SK-N-SH (cell line): ENCODE measurements at regions of chr7 and their contacts with region 1.

Region 1: GRCh38 chr7:142603870-142604448 is 145.3 kb upstream of the PRSS1 start:
- DNase-seq: peak; percentile 81
- H3K4me3 ChIP-seq: peak overlapping the region; percentile 6 to 7; a peak in 2 of 4 replicates
- H3K27ac ChIP-seq: no peak overlapping the region
- H3K4me1 ChIP-seq: peaks cover 0 to 5% of the 10 kb centered on the region in 2 experiments; a peak in 2 of 4 replicates
- H3K27me3 ChIP-seq: no peaks in the 10 kb centered on the region
- CTCF ChIP-seq: peak; percentile 99
- EP300 ChIP-seq: no peak
- RAD21 ChIP-seq: peak; percentile 100

Region 2: GRCh38 chr7:142431491-142431890 is 172.5 kb before region 1 on chr7:
- CTCF ChIA-PET with region 1: no interaction called
- POLR2A ChIA-PET with region 1: no interaction called
- DNase-seq: no peak
- H3K4me3 ChIP-seq: no peak overlapping the region
- H3K27ac ChIP-seq: no peak overlapping the region
- H3K4me1 ChIP-seq: peaks cover 0 to 3% of the 10 kb centered on the region in 2 experiments; a peak in 1 of 4 replicates
- H3K27me3 ChIP-seq: no peaks in the 10 kb centered on the region; the same call in 1 of the 2 replicates
- CTCF ChIP-seq: no peak
- EP300 ChIP-seq: no peak
- RAD21 ChIP-seq: no peak

Region 3: DNA sequence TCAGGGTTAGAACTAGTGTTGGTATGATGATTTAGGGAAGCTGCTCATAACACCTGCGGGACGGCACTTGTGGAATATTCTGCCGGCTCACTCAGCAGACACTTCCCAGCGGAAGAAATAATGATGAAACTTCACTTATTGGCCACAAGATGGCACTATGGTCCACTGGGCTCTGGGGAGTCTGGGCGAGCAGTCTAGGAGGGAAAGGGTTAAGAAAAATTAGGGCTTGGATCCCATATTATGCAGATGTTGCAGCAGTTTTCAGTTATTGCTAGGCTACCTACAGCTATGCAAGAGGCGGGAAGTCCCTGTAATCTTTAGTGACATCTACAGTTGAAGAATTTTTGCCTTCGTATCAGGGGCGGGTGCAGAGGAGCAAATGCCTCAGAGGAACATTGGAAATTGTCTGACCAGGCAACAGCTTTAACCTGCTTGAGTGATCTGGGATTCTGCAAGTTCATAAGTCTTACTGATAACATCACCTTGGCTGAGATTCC is 107.4 kb before region 1 on chr7:
- CTCF ChIA-PET with region 1: interaction called, 14 read pairs
- POLR2A ChIA-PET with region 1: no interaction called
- DNase-seq: peak; percentile 67
- H3K4me3 ChIP-seq: no peak overlapping the region
- H3K27ac ChIP-seq: no peak overlapping the region
- H3K4me1 ChIP-seq: peaks cover 0 to 3% of the 10 kb centered on the region in 2 experiments; a peak in 1 of 4 replicates
- H3K27me3 ChIP-seq: peaks cover 21% of the 10 kb centered on the region; the same call in 1 of the 2 replicates
- CTCF ChIP-seq: peak; percentile 95
- EP300 ChIP-seq: no peak
- RAD21 ChIP-seq: peak; percentile 69

Region 4: GRCh38 chr7:142568435-142569097 is 35.4 kb before region 1 on chr7:
- CTCF ChIA-PET with region 1: interaction called, 12 read pairs
- POLR2A ChIA-PET with region 1: no interaction called
- DNase-seq: no peak
- H3K4me3 ChIP-seq: no peak overlapping the region
- H3K27ac ChIP-seq: peak overlapping the region in 1 of 2 experiments; percentile 61; a peak in 2 of 4 replicates
- H3K4me1 ChIP-seq: peaks cover 0 to 28% of the 10 kb centered on the region in 2 experiments; a peak in 3 of 4 replicates
- H3K27me3 ChIP-seq: no peaks in the 10 kb centered on the region
- CTCF ChIP-seq: no peak
- EP300 ChIP-seq: peak in 1 of 2 experiments; percentile 91; a peak in 2 of 4 replicates
- RAD21 ChIP-seq: no peak

Region 5: GRCh38 chr7:142632291-142633134 is 28.6 kb after region 1 on chr7:
- CTCF ChIA-PET with region 1: interaction called, 87 read pairs
- POLR2A ChIA-PET with region 1: interaction called, 3 read pairs
- DNase-seq: peak; percentile 87
- H3K4me3 ChIP-seq: no peak overlapping the region
- H3K27ac ChIP-seq: peak overlapping the region in 1 of 2 experiments; percentile 11; a peak in 1 of 4 replicates
- H3K4me1 ChIP-seq: no peaks in the 10 kb centered on the region; a peak in 2 of 4 replicates
- H3K27me3 ChIP-seq: peaks cover 14% of the 10 kb centered on the region; the same call in 1 of the 2 replicates
- CTCF ChIP-seq: peak; percentile 93
- EP300 ChIP-seq: no peak
- RAD21 ChIP-seq: peak; percentile 96

Region 6: DNA sequence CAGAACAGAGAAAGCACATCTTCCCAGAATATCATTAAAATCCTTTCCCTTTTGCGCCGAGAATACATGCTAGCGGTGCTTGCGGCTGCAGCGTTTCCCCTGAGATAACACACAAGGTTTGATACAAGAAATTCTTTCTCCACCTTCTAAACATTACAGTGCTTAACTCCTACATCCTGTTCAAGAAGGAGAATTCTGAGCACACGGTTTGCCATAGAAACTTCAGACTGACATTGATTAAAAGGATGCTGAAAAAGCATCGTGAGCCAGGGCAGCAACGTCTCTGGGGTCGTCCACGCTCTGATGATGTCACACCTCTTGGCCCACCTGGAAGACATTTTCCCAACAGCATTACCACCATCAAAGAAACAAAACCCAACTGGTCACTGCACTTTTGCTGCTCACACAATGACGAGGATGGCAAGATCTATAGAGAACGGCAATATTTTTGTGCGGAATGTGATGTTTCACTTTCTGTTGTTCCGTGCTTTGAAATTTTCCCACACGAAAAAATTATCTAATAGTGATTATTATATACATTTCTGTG is 118.4 kb after region 1 on chr7:
- CTCF ChIA-PET with region 1: no interaction called
- POLR2A ChIA-PET with region 1: no interaction called
- DNase-seq: no peak
- H3K4me3 ChIP-seq: no peak overlapping the region
- H3K27ac ChIP-seq: no peak overlapping the region
- H3K4me1 ChIP-seq: peaks cover 0 to 5% of the 10 kb centered on the region in 2 experiments; a peak in 1 of 4 replicates
- H3K27me3 ChIP-seq: no peaks in the 10 kb centered on the region; the same call in 1 of the 2 replicates
- CTCF ChIP-seq: no peak
- EP300 ChIP-seq: no peak
- RAD21 ChIP-seq: no peak

Region 7: GRCh38 chr7:142796608-142797385 is 192.8 kb after region 1 on chr7:
- CTCF ChIA-PET with region 1: interaction called, 417 read pairs
- POLR2A ChIA-PET with region 1: no interaction called
- DNase-seq: peak; percentile 75
- H3K4me3 ChIP-seq: peak overlapping the region in 1 of 2 experiments; percentile 28; a peak in 1 of 4 replicates
- H3K27ac ChIP-seq: no peak overlapping the region
- H3K4me1 ChIP-seq: peaks cover 0 to 9% of the 10 kb centered on the region in 2 experiments; a peak in 1 of 4 replicates
- H3K27me3 ChIP-seq: peaks cover 61% of the 10 kb centered on the region
- CTCF ChIP-seq: no peak
- EP300 ChIP-seq: no peak
- RAD21 ChIP-seq: no peak

Region 8: DNA sequence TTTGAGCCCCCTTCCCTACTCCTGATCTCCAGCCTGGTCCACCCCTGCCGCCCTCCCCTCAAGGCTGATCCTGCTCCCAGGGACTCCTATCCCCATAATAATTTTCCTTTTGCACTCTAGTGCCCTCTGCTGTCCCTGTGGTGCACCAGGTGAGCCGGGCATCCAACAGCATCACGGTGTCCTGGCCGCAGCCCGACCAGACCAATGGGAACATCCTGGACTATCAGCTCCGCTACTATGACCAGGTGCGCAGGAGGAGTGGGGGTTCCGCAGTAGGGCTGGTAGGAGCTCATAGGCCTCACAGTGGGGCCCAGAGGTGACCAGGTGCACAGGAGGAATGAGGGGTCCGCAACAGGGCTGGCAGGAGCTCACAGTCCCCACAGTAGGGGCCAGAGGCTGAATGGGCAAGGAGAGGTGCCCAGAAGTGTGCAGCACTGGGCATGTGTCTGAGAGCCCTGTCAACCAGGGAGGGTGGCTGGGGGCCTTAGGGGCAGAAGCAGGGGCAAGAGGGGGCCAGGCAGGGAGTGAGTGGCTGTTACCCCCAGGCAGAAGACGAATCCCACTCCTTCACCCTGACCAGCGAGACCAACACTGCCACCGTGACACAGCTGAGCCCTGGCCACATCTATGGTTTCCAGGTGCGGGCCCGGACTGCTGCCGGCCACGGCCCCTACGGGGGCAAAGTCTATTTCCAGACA is 262.6 kb after region 1 on chr7:
- CTCF ChIA-PET with region 1: interaction called, 38 read pairs
- POLR2A ChIA-PET with region 1: no interaction called
- DNase-seq: peak; percentile 88
- H3K4me3 ChIP-seq: no peak overlapping the region
- H3K27ac ChIP-seq: no peak overlapping the region
- H3K4me1 ChIP-seq: no peaks in the 10 kb centered on the region
- H3K27me3 ChIP-seq: peaks cover 11% of the 10 kb centered on the region
- CTCF ChIP-seq: peak; percentile 77
- EP300 ChIP-seq: no peak
- RAD21 ChIP-seq: peak; percentile 69

Region 9: GRCh38 chr7:142927085-142927745 is 323.3 kb after region 1 on chr7:
- CTCF ChIA-PET with region 1: no interaction called
- POLR2A ChIA-PET with region 1: no interaction called
- DNase-seq: no peak
- H3K4me3 ChIP-seq: no peak overlapping the region
- H3K27ac ChIP-seq: no peak overlapping the region
- H3K4me1 ChIP-seq: no peaks in the 10 kb centered on the region
- H3K27me3 ChIP-seq: peaks cover 13% of the 10 kb centered on the region; the same call in 1 of the 2 replicates
- CTCF ChIP-seq: no peak
- EP300 ChIP-seq: no peak
- RAD21 ChIP-seq: no peak